Natural killer cell (primary cell): ENCODE measurements at regions of chr1 and their contacts with region 1.

Region 1: DNA sequence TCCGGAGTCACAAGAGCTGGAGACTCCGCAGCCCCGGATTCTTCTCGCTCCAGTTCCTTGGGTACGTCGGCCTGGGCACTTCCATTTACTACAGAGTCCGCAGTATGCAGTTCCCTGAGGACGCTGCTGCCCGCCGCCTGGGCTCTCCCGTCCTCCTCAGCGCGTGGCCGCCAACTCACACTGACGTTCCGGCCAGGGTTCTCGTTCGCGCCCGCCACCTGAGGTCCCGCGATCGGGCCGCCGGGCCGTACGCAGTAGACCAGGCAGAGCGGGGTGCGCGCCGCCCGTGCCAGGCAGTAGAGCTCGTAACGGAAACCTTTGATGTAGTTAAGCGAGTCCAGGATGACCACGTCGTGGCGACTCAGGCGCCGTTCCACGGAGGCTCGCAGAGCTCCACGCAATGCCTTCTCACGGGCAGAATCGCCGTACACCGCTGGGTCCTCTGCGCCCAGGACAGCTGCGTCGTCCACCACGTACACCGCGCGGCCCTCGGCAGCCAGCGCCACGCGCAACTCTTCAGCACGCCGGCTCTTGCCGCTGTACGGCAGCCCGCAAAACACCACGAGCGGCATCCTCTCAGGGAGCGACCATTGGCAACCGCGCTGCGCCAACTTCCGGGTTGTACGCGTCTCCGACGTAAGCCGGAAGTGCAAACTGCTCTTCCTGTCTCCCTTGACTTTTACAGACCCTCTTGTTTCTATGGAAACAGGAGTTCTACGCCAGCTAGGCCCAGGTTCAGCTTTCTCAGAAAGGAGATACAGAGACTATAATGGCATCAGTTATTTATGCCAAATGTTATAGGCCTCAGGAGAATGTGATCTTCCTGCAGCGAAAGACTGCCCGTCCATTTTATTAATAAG is at the start of gene KTI12:
- DNase-seq: peak; percentile 79 to 96
- ATAC-seq: peak; percentile 91 to 94 (median 94)
- H3K4me3 ChIP-seq: peak within 1 kb of the TSS; percentile 83
- H3K4me3 Mint-ChIP-seq: peak within 1 kb of the TSS; percentile 92
- H3K27ac ChIP-seq: peak within 1 kb of the TSS; percentile 95
- H3K27ac Mint-ChIP-seq: peak within 1 kb of the TSS; percentile 92 to 94
- H3K4me1 ChIP-seq: peaks cover 21% of the 10 kb centered on the region
- H3K4me1 Mint-ChIP-seq: peaks cover 31 to 40% of the 10 kb centered on the region in 2 donors
- H3K27me3 ChIP-seq: no peaks in the 10 kb centered on the region
- H3K27me3 Mint-ChIP-seq: no peaks in the 10 kb centered on the region
- CTCF ChIP-seq: no peak
- total RNA-seq, gene KTI12: 12.6 to 13.8 (median 13.2) TPM

Region 2: GRCh38 chr1:52056163-52056936 is 22.9 kb after region 1 on chr1 and contains the start of gene BTF3L4:
- intact Hi-C with region 1: loop called (anchors 1 kb)
- DNase-seq: peak; percentile 77 to 93
- ATAC-seq: peak; percentile 85 to 93 (median 89)
- H3K4me3 ChIP-seq: peak within 1 kb of the TSS; percentile 93
- H3K4me3 Mint-ChIP-seq: peak within 1 kb of the TSS; percentile 92
- H3K27ac ChIP-seq: peak within 1 kb of the TSS; percentile 85
- H3K27ac Mint-ChIP-seq: peak within 1 kb of the TSS; percentile 92 to 95
- H3K4me1 ChIP-seq: peaks cover 12% of the 10 kb centered on the region
- H3K4me1 Mint-ChIP-seq: peaks cover 56 to 57% of the 10 kb centered on the region in 2 donors
- H3K27me3 ChIP-seq: no peaks in the 10 kb centered on the region
- H3K27me3 Mint-ChIP-seq: no peaks in the 10 kb centered on the region
- CTCF ChIP-seq: no peak
- total RNA-seq, gene BTF3L4: 24.2 to 25.3 (median 25.2) TPM